Naive thymus-derived CD8-positive, alpha-beta T cell (primary cell): ENCODE measurements at regions of chr19 and their contacts with region 1.

Region 1: DNA sequence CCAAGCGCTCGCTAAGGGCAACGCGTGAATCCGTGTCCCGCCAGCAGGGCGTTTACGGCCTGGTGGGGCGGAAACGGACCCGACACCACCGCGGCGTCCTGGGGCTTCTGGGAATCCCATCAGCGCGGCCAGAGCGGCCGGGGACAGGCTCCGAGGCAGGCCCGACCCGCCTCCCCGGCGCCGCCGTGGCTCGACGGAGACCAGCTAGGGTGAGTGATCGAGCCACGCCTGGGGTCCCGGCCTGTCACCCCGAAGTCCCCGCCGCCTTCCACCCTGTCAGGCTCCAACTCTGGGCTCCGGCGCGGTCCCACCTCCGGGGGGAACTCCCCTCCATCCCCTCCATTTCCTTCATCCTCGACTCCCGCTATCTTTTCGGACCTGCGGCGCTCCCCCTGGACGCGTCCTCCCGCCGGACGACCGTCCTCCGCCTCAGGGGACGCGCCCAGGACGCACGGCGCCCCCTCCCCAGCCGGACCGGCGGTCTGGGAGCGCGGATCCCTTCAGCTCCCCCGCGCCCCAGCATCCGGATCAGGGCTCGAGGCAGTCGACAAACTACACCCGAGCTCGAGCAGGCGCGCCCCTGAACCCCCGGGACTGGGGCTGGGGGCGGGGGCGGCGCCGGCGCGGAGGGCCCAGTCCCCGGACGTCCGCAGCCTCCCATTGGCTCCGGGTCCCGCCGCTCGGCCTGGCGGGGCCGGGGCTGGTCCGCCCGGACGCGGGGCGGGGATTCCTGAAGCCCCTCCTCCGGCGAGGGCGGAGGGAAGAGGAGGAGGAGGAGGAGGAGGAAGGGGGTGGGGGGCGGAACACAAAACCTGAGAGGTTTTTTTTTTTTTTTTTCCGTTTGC is 638 bp upstream of the BICRA start:
- DNase-seq: peak; percentile 92 to 98 (median 96)
- ATAC-seq: peak; percentile 85
- H3K4me3 Mint-ChIP-seq: peak overlapping the region; percentile 74 to 89 (median 84)
- H3K27ac Mint-ChIP-seq: peak overlapping the region; percentile 66 to 94 (median 84)
- H3K4me1 Mint-ChIP-seq: peaks cover 9 to 43% (median 35%) of the 10 kb centered on the region in 4 donors
- H3K27me3 Mint-ChIP-seq: no peaks in the 10 kb centered on the region

Region 2: GRCh38 chr19:47483800-47484690 is 124.3 kb before region 1 on chr19 and contains the start of gene KPTN:
- POLR2A ChIA-PET with region 1: interaction called, 11 read pairs
- DNase-seq: peak; percentile 81 to 93 (median 87)
- ATAC-seq: peak; percentile 86 to 89
- H3K4me3 Mint-ChIP-seq: peak within 1 kb of the TSS; percentile 93 to 99 (median 97)
- H3K27ac Mint-ChIP-seq: peak within 1 kb of the TSS; percentile 97 to 99 (median 98)
- H3K4me1 Mint-ChIP-seq: peaks cover 22 to 55% (median 46%) of the 10 kb centered on the region in 4 donors
- H3K27me3 Mint-ChIP-seq: no peaks in the 10 kb centered on the region
- polyA plus RNA-seq, gene KPTN: 5.8 to 8.0 (median 7.6) TPM

Region 3: DNA sequence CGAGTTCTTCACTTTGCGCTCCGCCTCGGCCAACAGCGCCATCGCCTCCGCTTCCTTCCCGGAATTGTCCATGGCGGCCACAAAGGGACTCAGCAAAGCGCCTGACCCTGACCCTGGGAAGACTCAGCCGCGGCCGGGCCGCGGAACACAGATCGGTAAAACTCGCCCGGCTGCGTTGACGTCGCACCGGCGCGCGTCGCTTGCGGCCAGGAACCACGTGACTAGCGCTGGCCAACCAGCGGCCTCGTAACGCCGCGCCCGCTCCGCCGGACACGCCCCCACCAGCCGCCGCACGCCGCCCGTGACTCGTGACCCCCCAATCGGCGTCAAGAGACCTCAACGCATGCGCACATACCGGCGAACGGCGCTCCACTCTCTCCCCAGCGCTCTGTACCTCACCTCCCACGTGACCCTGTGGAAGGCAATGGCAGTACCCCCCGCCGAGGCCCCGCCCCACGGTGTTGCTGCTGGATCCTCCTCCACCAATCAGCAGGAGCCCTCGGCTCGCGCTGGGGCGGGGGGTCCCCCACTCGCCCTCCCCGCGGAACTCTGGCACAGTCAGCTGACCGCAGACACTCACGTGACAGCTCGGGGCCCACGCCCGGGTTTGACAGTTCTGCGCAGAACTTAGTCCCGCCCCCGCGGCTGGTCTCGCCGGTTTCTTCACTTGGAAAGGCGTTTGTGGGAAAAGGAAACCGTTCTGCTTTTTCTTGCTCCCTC is 93.3 kb before region 1 on chr19 and contains the start of gene NAPA:
- POLR2A ChIA-PET with region 1: interaction called, 20 read pairs
- DNase-seq: peak; percentile 99 to 100 (median 100)
- ATAC-seq: peak; percentile 90 to 91
- H3K4me3 Mint-ChIP-seq: peak within 1 kb of the TSS; percentile 95 to 100 (median 98)
- H3K27ac Mint-ChIP-seq: peak within 1 kb of the TSS; percentile 95 to 100 (median 98)
- H3K4me1 Mint-ChIP-seq: peaks cover 54 to 99% (median 95%) of the 10 kb centered on the region in 4 donors
- H3K27me3 Mint-ChIP-seq: no peaks in the 10 kb centered on the region
- polyA plus RNA-seq, gene NAPA: 88.7 to 116 (median 89.6) TPM

Region 4: GRCh38 chr19:47573071-47574026 is 34.9 kb before region 1 on chr19 and contains the start of gene ZNF541:
- POLR2A ChIA-PET with region 1: interaction called, 15 read pairs
- DNase-seq: peak; percentile 76 to 91 (median 88)
- ATAC-seq: peak; percentile 79 to 82
- H3K4me3 Mint-ChIP-seq: peak within 1 kb of the TSS; percentile 64 to 87 (median 75)
- H3K27ac Mint-ChIP-seq: peak within 1 kb of the TSS; percentile 53 to 93 (median 73)
- H3K4me1 Mint-ChIP-seq: peaks cover 18 to 48% (median 38%) of the 10 kb centered on the region in 4 donors
- H3K27me3 Mint-ChIP-seq: no peaks in the 10 kb centered on the region
- polyA plus RNA-seq, gene ZNF541: 0.27 TPM in 1 of 3 donors, not detected in the others

Region 5: DNA sequence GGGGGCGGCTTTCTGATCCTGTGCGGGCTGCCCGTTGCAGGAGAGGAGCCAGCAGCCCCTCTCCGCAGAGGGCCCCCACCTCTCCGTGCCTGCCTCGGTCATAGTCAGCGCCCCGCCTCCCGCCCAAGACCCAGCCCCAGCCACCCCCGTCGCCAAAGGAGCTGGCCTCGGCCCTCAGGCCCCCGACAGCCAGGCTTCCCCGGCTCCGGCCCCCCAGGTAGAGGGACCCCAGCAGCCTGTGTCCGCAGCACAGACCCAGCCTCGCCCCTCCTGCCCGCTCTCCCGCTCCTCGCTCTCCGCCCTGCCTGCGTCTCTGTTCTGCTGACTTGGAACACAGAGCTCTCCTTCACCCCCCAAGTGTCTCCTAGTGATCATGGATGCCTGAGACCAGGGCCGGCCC is 73.6 kb after region 1 on chr19:
- POLR2A ChIA-PET with region 1: no interaction called
- DNase-seq: no peak
- ATAC-seq: no peak
- H3K4me3 Mint-ChIP-seq: no peak overlapping the region
- H3K27ac Mint-ChIP-seq: peak overlapping the region in 1 of 10 donors; percentile 27
- H3K4me1 Mint-ChIP-seq: peaks cover 0 to 7% (median 3%) of the 10 kb centered on the region in 4 donors
- H3K27me3 Mint-ChIP-seq: no peaks in the 10 kb centered on the region